Activated B cell treated with CpG ODN at 0.5 μM for 24 hours (primary cell): ENCODE measurements at regions of chr6 and their contacts with region 1.

Region 1: GRCh38 chr6:43386492-43386891 is 17.0 kb upstream of the ZNF318 start:
- DNase-seq: no peak
- ATAC-seq: no peak
- H3K4me3 Mint-ChIP-seq: peak overlapping the region; percentile 15
- H3K27ac Mint-ChIP-seq: peak overlapping the region; percentile 98
- H3K4me1 Mint-ChIP-seq: peaks cover 65% of the 10 kb centered on the region
- H3K27me3 Mint-ChIP-seq: peaks cover 18% of the 10 kb centered on the region
- CTCF ChIP-seq: no peak

Region 2: GRCh38 chr6:42879372-42880239 is 506.9 kb before region 1 on chr6 and contains the start of gene RPL7L1:
- CTCF ChIA-PET with region 1: no interaction called
- POLR2A ChIA-PET with region 1: interaction called, 13 read pairs
- intact Hi-C with region 1: no loop called
- DNase-seq: peak; percentile 76
- ATAC-seq: peak; percentile 92
- H3K4me3 Mint-ChIP-seq: peak within 1 kb of the TSS; percentile 100
- H3K27ac Mint-ChIP-seq: peak within 1 kb of the TSS; percentile 99
- H3K4me1 Mint-ChIP-seq: peaks cover 28% of the 10 kb centered on the region
- H3K27me3 Mint-ChIP-seq: no peaks in the 10 kb centered on the region
- CTCF ChIP-seq: no peak
- total RNA-seq, gene RPL7L1: 94.5 and 110 TPM in 2 replicates

Region 3: GRCh38 chr6:43308101-43308989 is 78.1 kb before region 1 on chr6 and contains the start of gene CRIP3:
- CTCF ChIA-PET with region 1: interaction called, 14 read pairs
- POLR2A ChIA-PET with region 1: interaction called, 11 read pairs
- intact Hi-C with region 1: no loop called
- DNase-seq: peak; percentile 58
- ATAC-seq: peak; percentile 75
- H3K4me3 Mint-ChIP-seq: peak within 1 kb of the TSS; percentile 90
- H3K27ac Mint-ChIP-seq: peak within 1 kb of the TSS; percentile 69
- H3K4me1 Mint-ChIP-seq: peaks cover 53% of the 10 kb centered on the region
- H3K27me3 Mint-ChIP-seq: no peaks in the 10 kb centered on the region
- CTCF ChIP-seq: no peak
- total RNA-seq, gene CRIP3: 42.2 and 49.9 TPM in 2 replicates

Region 4: DNA sequence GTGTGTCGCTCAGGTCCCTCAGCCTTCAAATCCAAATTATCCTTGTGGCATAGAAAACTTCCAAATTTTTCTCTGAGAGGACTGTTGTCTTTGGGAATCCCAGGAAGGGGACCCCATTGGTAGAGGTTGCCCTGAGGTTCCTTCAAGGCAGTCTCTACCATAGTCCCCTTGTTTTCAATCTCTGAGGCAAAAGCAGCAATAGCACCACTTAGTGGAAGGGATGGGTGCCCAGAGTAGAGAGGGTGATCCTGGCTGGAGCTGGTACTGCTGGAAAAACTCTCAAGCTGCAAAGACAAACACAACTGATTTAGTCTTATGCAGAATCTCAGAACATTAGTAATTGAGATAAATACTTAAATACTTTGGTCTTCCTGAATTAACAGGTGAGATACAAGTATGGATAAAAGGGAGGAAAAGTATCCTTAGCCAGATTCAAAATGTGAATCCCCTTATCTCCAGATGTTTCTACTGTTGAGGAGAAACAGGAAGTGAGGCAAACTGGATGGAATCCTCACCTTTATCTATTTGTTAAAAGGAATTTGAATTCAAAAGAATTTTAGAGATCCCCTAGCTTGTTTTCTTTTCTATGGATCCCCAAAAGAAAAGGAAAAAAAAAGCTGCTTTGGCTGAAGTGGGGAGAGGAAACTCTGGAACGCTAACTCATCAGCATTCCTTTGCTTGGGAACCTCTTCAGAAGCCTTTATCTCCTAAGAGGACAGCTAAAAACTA is 30.5 kb before region 1 on chr6:
- CTCF ChIA-PET with region 1: interaction called, 10 read pairs
- POLR2A ChIA-PET with region 1: interaction called, 10 read pairs
- intact Hi-C with region 1: no loop called
- DNase-seq: no peak
- ATAC-seq: peak; percentile 65
- H3K4me3 Mint-ChIP-seq: no peak overlapping the region
- H3K27ac Mint-ChIP-seq: no peak overlapping the region
- H3K4me1 Mint-ChIP-seq: peaks cover 28% of the 10 kb centered on the region
- H3K27me3 Mint-ChIP-seq: no peaks in the 10 kb centered on the region
- CTCF ChIP-seq: no peak

Region 5: DNA sequence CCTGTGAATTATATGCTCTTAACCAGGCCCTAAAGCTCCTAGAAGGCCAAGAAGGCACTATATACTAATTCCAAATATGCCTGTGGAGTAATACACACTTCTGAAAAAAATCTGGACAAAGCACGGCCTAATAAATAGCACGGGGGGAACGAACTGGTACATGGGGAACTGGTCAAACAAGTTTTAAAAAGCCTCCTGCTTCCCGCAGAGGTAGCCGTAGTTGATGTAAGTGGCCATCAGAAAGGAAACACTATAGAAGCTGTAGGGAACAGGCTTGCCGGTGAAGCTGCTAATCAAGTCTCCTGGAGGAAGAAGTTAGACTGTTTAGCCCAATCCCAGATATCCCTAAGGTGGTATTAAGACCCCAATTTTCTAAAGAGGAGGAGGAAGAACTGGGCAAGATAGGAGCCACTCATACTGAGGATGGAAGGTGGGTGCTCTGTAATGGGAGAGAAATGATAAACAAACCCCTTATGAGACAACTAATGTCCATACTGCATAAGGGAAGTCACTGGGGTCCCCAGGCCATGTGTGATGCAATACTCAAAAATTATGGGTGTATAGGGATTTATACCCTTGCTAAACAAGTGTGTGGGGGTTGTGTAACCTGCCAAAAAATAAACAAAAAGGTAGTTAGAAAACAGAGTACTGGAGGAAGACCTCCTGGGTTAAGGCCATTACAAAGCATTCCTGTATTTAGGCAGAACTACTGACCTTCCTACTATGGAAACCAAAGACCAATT is 10.1 kb after region 1 on chr6:
- CTCF ChIA-PET with region 1: interaction called, 6 read pairs
- POLR2A ChIA-PET with region 1: interaction called, 23 read pairs
- intact Hi-C with region 1: loop called (anchors 1 kb)
- DNase-seq: no peak
- ATAC-seq: no peak
- H3K4me3 Mint-ChIP-seq: no peak overlapping the region
- H3K27ac Mint-ChIP-seq: peak overlapping the region; percentile 37
- H3K4me1 Mint-ChIP-seq: peaks cover 47% of the 10 kb centered on the region
- H3K27me3 Mint-ChIP-seq: peaks cover 7% of the 10 kb centered on the region
- CTCF ChIP-seq: no peak

Region 6: DNA sequence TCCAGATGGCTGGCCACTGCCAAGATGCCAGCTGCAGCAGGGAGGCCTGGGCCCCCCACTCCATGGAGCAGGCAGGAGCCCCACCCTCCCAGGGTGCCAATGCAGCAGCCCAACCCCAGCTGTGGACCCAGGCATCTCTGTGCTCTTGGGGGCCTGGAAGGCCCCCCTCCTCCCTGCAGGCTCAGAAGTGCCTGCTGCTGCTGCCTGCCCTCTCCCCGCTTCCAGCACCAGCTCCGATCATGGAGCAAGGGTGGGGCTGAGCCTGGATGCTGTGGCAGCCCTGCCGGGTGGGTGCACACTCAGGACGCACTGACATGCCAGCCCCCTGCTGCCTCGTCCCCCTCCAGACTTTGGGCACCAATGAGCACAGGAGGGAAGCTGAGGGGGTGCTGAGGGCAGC is 26.0 kb after region 1 on chr6:
- CTCF ChIA-PET with region 1: no interaction called
- POLR2A ChIA-PET with region 1: no interaction called
- intact Hi-C with region 1: no loop called
- DNase-seq: no peak
- ATAC-seq: no peak
- H3K4me3 Mint-ChIP-seq: no peak overlapping the region
- H3K27ac Mint-ChIP-seq: no peak overlapping the region
- H3K4me1 Mint-ChIP-seq: no peaks in the 10 kb centered on the region
- H3K27me3 Mint-ChIP-seq: peaks cover 7% of the 10 kb centered on the region
- CTCF ChIP-seq: no peak

Region 7: DNA sequence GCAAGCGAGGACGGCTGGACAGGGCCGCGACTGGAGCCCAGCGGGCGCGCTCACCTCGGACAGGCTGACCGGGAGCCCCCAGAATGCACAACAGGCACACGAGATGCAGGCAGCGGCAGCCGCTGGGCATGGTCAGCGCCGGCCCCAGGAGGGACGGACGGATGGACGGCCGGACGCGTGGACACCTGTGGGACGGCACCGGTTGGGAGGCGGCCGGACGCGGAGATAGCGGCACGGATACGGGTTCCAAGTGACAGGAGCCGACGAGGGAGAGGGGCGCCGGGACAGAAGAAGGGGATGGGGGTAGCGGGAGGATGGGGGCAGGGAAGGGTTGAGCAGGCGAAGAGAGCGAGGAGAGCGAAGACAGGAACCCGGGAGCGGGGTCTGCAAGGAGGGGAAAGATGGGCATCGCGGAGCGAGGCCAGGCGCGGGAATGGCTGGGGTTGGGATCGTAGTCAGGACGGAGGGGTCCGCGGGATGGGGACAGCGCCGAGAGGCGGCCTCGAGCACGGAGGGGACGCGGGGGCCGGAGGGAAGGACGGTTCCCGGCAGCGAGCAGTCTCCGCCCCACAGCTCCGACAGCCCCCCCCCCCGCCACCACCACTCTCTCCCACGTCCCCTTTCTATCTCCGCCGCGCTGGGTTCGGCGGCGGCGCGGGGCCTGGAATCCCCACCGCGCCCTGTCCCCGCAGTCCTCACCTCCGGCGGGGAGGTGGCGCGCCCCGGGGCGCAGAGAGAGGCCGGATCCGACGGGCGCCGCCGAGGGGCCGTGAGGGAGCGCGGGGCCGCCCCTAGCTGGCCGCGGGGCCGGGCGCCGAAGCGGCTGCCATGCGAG is 68.4 kb after region 1 on chr6:
- CTCF ChIA-PET with region 1: no interaction called
- POLR2A ChIA-PET with region 1: interaction called, 5 read pairs
- intact Hi-C with region 1: loop called (anchors 1 kb)
- DNase-seq: peak; percentile 72
- ATAC-seq: peak; percentile 49
- H3K4me3 Mint-ChIP-seq: peak overlapping the region; percentile 85
- H3K27ac Mint-ChIP-seq: no peak overlapping the region
- H3K4me1 Mint-ChIP-seq: peaks cover 16% of the 10 kb centered on the region
- H3K27me3 Mint-ChIP-seq: no peaks in the 10 kb centered on the region
- CTCF ChIP-seq: no peak

Region 8: DNA sequence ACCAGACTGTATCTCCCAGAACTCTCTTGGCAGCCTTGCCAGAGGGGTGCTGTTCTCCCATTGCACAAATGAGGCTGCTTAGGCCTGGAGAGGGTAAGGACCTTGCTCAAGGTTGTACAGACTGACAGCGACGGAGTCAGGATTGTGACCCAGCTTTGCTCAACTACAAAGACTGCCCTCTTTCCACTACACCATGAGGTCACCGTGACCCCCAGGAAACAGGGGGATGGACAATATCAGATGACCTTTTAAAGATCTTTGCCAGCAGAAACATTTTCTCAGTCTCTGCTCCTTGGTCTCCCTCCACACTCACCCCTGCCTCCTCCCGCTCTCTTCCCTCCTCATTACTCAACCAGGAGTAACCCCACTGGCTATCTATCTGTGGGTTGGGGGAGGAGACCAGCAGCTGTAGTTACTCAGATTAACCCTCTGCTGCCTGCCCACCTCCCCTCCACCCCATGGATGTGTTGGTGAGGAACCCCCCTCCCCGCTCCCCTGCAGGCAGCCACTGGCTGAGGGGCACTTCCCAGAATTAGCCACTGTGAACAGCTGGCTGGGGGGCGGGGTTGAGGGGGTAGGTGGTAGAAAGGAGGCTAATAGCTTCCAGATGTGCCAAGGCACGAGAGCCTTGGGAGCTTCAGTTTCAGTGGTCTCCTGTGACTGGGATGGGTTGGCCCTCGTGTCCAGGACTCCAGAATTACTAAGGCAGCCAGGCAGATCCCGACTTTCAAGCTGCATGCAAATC is 328.0 kb after region 1 on chr6:
- CTCF ChIA-PET with region 1: no interaction called
- POLR2A ChIA-PET with region 1: no interaction called
- intact Hi-C with region 1: loop called (anchors 10 kb)
- DNase-seq: peak; percentile 65
- ATAC-seq: peak; percentile 15
- H3K4me3 Mint-ChIP-seq: peak overlapping the region; percentile 81
- H3K27ac Mint-ChIP-seq: peak overlapping the region; percentile 91
- H3K4me1 Mint-ChIP-seq: peaks cover 60% of the 10 kb centered on the region
- H3K27me3 Mint-ChIP-seq: no peaks in the 10 kb centered on the region
- CTCF ChIP-seq: no peak